Heart right ventricle (tissue), 16 donors: ENCODE measurements at regions of chr16 and their contacts with region 1.

Region 1: DNA sequence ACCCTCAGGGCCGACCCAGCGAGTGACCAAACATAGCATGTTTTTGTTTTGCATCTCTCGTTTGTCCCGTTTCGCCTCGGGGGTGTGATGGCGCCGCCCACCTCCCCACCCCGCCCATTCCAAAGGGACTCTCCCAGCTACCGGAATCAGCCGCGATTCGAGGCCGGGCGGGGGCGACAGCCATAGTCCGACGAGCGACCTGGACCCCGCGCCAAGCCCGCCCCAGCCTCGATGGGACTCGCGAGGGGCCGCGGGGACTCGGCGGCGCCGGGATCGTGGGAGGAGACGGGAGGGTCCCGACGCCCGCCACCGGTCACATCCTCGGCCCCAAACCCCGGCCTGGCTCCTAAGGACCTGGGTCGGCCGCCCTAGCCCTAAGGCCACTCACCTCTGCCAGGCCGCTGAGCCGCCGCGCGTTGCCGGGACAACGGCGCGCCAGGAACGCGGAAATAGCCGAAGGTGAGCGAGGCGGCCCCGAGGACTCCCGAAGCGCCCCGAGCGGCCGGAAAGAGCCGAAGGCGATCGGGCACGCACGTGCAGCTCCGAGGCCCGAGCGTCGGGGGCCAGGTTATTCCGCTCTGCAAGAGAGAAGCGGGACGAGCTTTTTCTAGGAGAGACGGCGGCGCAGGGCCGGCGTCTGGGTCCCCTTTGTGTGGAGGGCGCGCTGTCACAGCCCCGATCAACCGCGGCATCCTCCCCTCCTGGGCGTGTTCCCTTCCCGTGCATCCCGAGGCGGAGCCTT is 1.4 kb downstream of the IFT140 start:
- DNase-seq: peak; percentile 86 to 93
- ATAC-seq: peak; percentile 71 to 87 (median 81)
- H3K4me3 ChIP-seq: peak overlapping the region; percentile 48 to 94 (median 78)
- H3K27ac ChIP-seq: peak overlapping the region; percentile 14 to 91 (median 84)
- H3K4me1 ChIP-seq: peaks cover 8 to 43% (median 37%) of the 10 kb centered on the region in 9 donors
- H3K27me3 ChIP-seq: no peaks in the 10 kb centered on the region
- CTCF ChIP-seq: peak in 1 of 9 donors; percentile 13

Region 2: DNA sequence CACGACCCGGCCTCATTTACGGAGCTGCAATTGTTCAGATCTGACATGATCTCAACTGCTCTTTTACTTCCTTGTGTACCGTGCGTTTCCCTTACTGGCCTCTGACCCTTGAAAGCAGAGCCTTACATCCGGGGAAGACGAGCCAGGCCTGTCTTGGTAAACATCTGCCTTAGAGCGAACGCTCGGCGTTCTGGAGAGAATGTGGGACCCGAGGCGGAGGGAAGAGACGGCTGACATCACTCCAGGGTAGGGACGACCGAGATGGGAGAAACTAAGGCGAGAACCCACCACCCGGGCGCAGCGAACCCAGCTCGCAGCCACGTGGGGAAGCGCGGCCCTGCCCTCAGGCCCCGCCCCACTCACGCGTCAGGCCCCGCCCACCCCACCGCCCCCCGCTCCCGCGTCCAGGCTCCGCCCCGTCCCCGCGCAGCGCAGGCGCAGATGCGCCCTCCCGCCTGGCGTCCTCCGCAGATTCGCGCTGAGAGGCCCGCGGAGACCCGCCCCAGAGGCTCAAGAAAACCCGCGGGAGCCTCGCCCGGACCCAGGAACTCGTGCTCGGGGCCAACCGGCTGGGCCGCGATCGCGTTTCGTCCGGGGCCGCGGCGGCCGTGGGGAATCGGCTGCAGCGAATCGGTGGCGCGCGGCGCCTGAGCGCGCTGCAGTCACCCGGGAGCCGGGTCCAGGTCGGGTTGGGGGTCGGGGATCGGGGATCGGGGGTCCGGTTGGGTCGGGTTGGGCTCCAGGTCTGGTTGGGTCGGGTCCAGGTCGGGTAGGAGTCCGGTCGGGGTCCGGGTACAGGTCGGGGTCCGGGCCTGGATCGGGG is 117.3 kb before region 1 on chr16 and contains the start of gene TELO2:
- intact Hi-C with region 1: loop called in 6 of 10 experiments (anchors 2 to 10 kb)
- DNase-seq: peak; percentile 71 to 88
- ATAC-seq: peak; percentile 88 to 94 (median 91)
- H3K4me3 ChIP-seq: peak within 1 kb of the TSS; percentile 65 to 92 (median 80)
- H3K27ac ChIP-seq: peak within 1 kb of the TSS; percentile 82 to 97 (median 90)
- H3K4me1 ChIP-seq: peaks cover 9 to 31% (median 25%) of the 10 kb centered on the region in 9 donors
- H3K27me3 ChIP-seq: no peaks in the 10 kb centered on the region
- CTCF ChIP-seq: peak in 1 of 9 donors; percentile 9
- total RNA-seq, gene TELO2: 14.5 to 22.0 (median 19.7) TPM

Region 3: GRCh38 chr16:1543085-1543896 is 67.2 kb before region 1 on chr16:
- intact Hi-C with region 1: loop called in 1 of 10 experiments (anchors 5 kb)
- DNase-seq: peak; percentile 81 to 86
- ATAC-seq: peak; percentile 36 to 81 (median 66)
- H3K4me3 ChIP-seq: peak overlapping the region in 4 of 10 donors; percentile 0 to 25 (median 4)
- H3K27ac ChIP-seq: peak overlapping the region; percentile 16 to 99 (median 96)
- H3K4me1 ChIP-seq: peaks cover 68 to 100% (median 96%) of the 10 kb centered on the region in 9 donors
- H3K27me3 ChIP-seq: no peaks in the 10 kb centered on the region
- CTCF ChIP-seq: peak in 4 of 9 donors; percentile 13 to 22 (median 15)

Region 4: GRCh38 chr16:1564325-1564724 is 46.1 kb before region 1 on chr16:
- intact Hi-C with region 1: loop called in 2 of 10 experiments (anchors 5 kb)
- DNase-seq: no peak
- ATAC-seq: no peak
- H3K4me3 ChIP-seq: no peak overlapping the region
- H3K27ac ChIP-seq: no peak overlapping the region
- H3K4me1 ChIP-seq: peaks cover 0 to 24% (median 5%) of the 10 kb centered on the region in 9 donors
- H3K27me3 ChIP-seq: no peaks in the 10 kb centered on the region
- CTCF ChIP-seq: peak in 8 of 9 donors; percentile 20 to 56 (median 48)

Region 5: DNA sequence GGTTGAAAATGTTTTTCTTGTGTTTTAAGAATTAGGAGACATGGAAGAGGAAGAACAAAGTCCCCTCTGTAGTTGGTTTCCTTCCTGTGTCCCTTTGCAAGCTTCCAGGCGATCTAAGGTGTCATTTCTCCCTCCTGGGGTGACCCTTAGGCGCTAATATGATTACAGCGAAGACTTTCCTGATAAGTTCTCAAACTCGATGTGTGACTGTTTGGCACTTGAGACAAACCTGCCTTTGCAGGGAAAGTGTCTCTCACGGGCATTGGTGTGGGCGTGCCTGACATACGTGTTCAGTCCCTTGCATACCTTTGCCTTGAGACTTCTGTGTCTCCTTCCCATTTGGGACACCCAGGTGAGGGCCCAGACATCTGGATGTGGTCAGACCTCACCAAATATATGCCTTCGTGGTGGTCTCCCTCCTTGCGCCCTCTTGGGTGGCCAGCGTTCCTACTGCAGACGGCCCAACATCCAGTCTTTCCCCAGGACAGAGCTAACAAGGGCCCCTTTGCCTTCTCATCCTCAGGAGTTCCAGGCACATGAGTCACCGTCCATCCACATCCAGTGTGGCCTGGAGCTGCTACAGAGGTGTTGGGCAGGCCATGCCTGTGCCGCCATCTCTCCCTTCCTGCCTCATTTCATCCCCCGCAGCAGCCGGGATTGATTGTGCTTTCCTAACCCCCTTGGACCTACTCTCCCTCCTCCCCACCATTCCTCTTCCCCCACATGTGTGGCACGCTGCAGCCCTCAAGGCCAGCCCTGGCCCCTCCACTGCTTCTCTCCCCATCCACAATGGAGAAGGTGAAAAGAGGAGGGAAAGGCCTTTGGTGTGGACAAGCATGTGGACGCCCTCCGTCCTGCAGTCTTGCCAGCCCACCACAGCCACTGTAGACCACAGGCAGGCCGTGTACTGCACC is 64.6 kb after region 1 on chr16:
- intact Hi-C with region 1: no loop called
- DNase-seq: no peak
- ATAC-seq: no peak
- H3K4me3 ChIP-seq: no peak overlapping the region
- H3K27ac ChIP-seq: no peak overlapping the region
- H3K4me1 ChIP-seq: peaks cover 3 to 15% (median 6%) of the 10 kb centered on the region in 9 donors
- H3K27me3 ChIP-seq: no peaks in the 10 kb centered on the region
- CTCF ChIP-seq: no peak